ENCODE measurements at regions of chr5 and their contacts with region 1.

Region 1: GRCh38 chr5:112976432-112977309 is at the start of gene DCP2:
- DNase-seq: peak; percentile 94 to 98
- ATAC-seq: peak; percentile 96 to 99 (median 96)
- H3K4me3 ChIP-seq: peak within 1 kb of the TSS; percentile 90
- H3K4me3 Mint-ChIP-seq: peak within 1 kb of the TSS; percentile 98
- H3K27ac ChIP-seq: peak within 1 kb of the TSS; percentile 82
- H3K27ac Mint-ChIP-seq: peak within 1 kb of the TSS; percentile 87 to 94
- H3K4me1 ChIP-seq: peaks cover 12% of the 10 kb centered on the region
- H3K4me1 Mint-ChIP-seq: peaks cover 51 to 53% of the 10 kb centered on the region in 2 donors
- H3K27me3 ChIP-seq: no peaks in the 10 kb centered on the region
- H3K27me3 Mint-ChIP-seq: no peaks in the 10 kb centered on the region
- CTCF ChIP-seq: no peak
- total RNA-seq, gene DCP2: 69.3 to 82.9 (median 76.7) TPM

Region 2: DNA sequence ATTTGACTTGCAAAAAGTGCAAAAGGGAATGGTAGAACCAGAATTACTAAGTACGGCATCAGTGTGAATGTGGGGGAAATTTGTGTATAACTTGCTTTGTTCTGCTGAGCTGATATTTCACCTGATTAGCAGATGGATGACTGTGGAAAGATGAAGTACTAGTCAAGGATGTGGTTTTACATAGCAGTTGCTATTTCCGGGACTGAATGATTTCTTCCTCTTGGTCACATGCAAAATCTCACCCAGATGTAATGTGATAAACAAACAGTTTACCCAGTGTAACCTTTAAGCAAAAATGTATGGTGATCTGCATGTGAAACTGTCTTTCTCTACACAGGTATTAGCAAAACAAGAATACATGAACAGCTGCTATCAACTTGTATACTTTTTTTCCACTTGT is 46.0 kb after region 1 on chr5:
- intact Hi-C with region 1: loop called (anchors 1 kb)
- DNase-seq: peak in 1 of 2 donors; percentile 81
- ATAC-seq: peak; percentile 91 to 97 (median 96)
- H3K4me3 ChIP-seq: no peak overlapping the region
- H3K4me3 Mint-ChIP-seq: peak overlapping the region; percentile 82
- H3K27ac ChIP-seq: peak overlapping the region; percentile 73
- H3K27ac Mint-ChIP-seq: peak overlapping the region; percentile 91 to 94
- H3K4me1 ChIP-seq: peaks cover 6% of the 10 kb centered on the region
- H3K4me1 Mint-ChIP-seq: peaks cover 34 to 56% of the 10 kb centered on the region in 2 donors
- H3K27me3 ChIP-seq: no peaks in the 10 kb centered on the region
- H3K27me3 Mint-ChIP-seq: no peaks in the 10 kb centered on the region
- CTCF ChIP-seq: no peak

Region 3: GRCh38 chr5:113487781-113488644 is 511.3 kb after region 1 on chr5 and contains the start of gene MCC:
- intact Hi-C with region 1: no loop called
- DNase-seq: peak in 1 of 2 donors; percentile 46
- ATAC-seq: peak in 1 of 3 donors; percentile 53
- H3K4me3 ChIP-seq: no peak within 1 kb of the TSS
- H3K4me3 Mint-ChIP-seq: peak within 1 kb of the TSS; percentile 61
- H3K27ac ChIP-seq: no peak within 1 kb of the TSS
- H3K27ac Mint-ChIP-seq: no peak within 1 kb of the TSS
- H3K4me1 ChIP-seq: peaks cover 20% of the 10 kb centered on the region
- H3K4me1 Mint-ChIP-seq: peaks cover 6 to 10% of the 10 kb centered on the region in 2 donors
- H3K27me3 ChIP-seq: peaks cover 39% of the 10 kb centered on the region
- H3K27me3 Mint-ChIP-seq: peaks cover 54 to 75% of the 10 kb centered on the region in 2 donors
- CTCF ChIP-seq: no peak
- total RNA-seq, gene MCC: 0.68 to 1.8 (median 1.4) TPM

Region 4: DNA sequence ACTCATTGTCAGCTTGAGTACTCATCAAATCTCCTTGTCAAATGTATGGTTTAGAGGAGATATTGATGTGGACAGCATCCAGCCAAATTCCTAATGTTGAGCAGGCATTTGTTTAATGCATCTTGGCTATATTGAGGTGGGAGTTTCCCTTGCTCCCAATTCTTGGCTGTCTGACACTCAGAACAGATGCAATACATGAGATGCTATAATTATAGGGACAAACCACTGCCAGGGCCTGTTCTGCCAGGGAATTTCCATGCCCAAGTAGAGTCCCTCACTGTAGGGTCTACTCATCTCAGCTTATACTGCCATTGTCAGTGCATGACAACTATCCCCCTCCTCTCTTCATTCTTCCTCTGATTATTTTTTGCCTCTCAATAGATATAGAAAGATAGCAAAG is 993.2 kb after region 1 on chr5:
- intact Hi-C with region 1: no loop called
- DNase-seq: no peak
- ATAC-seq: no peak
- H3K4me3 ChIP-seq: no peak overlapping the region
- H3K4me3 Mint-ChIP-seq: no peak overlapping the region
- H3K27ac ChIP-seq: no peak overlapping the region
- H3K27ac Mint-ChIP-seq: no peak overlapping the region
- H3K4me1 ChIP-seq: no peaks in the 10 kb centered on the region
- H3K4me1 Mint-ChIP-seq: no peaks in the 10 kb centered on the region
- H3K27me3 ChIP-seq: no peaks in the 10 kb centered on the region
- H3K27me3 Mint-ChIP-seq: no peaks in the 10 kb centered on the region
- CTCF ChIP-seq: no peak